Left cardiac atrium (tissue), 4 donors: ENCODE measurements at regions of chr10 and their contacts with region 1.

Region 1: GRCh38 chr10:68156373-68157185 is 47.3 kb downstream of the MYPN start:
- DNase-seq: peak; percentile 55
- ATAC-seq: peak; percentile 11 to 15

Region 2: DNA sequence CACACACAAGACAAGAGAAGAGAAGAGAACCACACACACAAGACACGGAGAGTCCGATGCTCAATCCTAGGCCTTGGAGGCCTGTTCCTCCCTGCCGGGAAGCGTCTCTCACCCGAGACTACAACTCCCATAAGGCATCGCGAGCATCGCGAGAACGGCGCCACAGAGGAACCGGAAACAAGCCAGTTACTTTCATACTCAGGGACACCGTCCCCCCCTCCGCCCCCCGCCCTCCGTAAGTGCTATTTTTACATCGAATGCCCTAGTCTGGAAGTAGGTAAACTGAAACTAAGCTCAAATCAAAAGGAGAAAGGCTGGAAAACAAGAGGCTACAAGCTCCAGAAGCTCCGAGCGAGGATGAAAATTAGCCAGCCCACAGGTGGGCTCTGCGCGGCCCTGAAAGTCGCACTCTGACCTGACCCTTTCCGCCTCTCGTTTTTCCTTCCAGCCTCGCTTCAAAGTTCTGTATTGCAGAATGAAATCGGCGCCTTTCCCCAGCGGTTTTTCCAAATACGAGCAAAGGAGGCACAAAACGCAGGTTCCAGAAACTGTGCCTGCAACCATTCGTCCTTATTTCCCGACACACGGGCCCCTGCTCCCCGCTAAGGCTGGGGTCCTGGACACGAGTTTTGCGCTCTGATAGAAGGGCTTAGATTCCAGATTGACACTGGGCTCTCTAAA is 307.1 kb before region 1 on chr10:
- intact Hi-C with region 1: loop called in 1 of 2 experiments (anchors 2 kb)
- DNase-seq: peak; percentile 96
- ATAC-seq: peak; percentile 99 to 100

Region 3: DNA sequence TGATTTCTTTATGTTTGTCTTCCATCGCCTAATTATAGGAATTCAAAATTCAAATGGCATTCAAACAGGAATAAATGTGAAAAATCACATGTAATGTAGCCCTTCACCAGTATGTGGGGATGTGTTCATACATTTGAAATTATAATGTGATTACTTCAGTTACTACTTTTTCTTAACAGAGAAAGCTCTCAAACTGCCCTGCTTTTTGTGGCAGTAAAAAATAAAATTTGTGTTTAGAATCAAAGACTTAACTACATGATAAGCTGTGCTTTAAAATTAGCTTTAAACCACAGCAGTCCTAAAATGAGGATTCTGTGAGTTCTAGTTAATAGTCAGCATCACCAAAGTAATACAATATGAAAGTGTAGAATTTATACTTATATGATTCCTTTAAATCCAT is 73.7 kb before region 1 on chr10:
- intact Hi-C with region 1: loop called in 1 of 2 experiments (anchors 1 kb)
- DNase-seq: no peak
- ATAC-seq: no peak

Region 4: GRCh38 chr10:68633816-68634466 is 477.4 kb after region 1 on chr10:
- intact Hi-C with region 1: no loop called
- DNase-seq: no peak
- ATAC-seq: no peak